ENCODE measurements at regions of chr2 and their contacts with region 1.

Region 1: DNA sequence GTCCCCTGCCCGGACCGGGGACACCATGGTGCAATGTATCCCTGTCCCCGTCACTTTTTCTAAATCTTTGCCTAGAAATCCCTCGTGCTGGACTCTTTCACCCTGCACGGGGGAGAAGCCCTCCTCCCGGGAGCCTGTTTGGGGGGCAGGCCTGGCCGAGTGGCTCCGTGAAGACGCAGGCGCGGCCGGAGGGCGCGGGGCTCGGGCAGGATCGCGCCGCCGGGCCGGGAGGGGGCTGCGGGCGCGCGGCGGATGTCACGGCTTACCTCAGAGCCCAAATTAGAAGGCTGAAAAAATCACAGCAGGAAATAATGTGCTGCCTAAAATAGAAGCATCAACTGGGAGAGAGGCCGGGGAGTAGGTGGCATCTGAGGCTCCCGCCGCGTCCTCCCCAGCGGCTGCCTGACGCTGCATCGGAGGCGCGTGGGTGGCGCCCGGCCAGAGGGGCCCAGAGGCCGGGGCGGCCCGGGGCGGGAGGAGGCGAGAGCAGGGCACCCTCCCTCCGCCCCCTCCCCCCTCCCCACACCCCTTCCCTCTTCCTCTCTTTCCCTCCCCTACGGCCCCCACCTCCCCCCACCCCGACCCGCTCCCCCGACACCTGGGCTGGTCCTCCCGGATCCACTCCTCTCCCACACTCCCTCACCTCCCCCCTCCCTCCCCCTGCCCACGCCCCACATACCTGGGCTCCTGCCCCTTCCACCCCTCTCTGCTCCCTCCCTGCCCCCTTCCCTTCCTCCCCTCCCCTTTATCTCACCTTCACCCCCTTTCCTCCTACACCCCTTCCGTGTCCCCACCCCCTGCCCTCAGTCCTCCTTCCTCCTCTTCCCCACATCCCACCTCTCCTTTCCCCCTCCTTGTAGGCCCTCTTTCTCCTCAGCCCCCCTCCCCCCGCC is 51.9 kb downstream of the SLC4A1AP start:
- DNase-seq: peak in 1 of 2 experiments; percentile 66
- H3K4me3 ChIP-seq: peak overlapping the region; percentile 79 to 97 (median 82)
- H3K27ac ChIP-seq: peak overlapping the region; percentile 29; the same call in 1 of the 2 replicates
- H3K4me1 ChIP-seq: peaks cover 3 to 15% (median 6%) of the 10 kb centered on the region in 4 experiments
- H3K27me3 ChIP-seq: no peaks in the 10 kb centered on the region
- CTCF ChIP-seq: no peak
- EP300 ChIP-seq: no peak
- POLR2A ChIP-seq: no peak; a peak in 1 of 3 replicates
- RAD21 ChIP-seq: no peak

Region 2: DNA sequence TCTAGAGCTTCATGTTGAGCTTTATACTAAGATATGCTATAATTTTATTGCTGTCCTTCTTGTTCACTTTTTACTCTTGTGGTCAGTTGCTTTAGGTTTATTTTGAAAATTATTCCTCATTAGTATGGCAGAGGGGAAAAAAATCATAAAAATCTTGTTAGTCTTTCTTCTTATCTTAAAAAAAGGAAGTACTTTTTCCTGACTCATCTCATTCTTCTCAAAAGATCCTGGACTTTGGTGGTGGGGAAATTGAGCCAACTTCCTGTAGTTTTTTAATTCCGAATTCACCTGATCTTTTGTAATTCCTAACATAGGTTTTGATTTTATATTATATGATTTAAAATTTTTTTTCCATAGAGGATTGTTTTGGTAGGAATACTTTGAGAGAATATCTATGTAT is 48.1 kb before region 1 on chr2:
- CTCF ChIA-PET with region 1: no interaction called
- POLR2A ChIA-PET with region 1: no interaction called
- DNase-seq: no peak
- H3K4me3 ChIP-seq: no peak overlapping the region
- H3K27ac ChIP-seq: no peak overlapping the region
- H3K4me1 ChIP-seq: peaks cover 0 to 1% (median 0%) of the 10 kb centered on the region in 4 experiments; a peak in 2 of 7 replicates
- H3K27me3 ChIP-seq: no peaks in the 10 kb centered on the region
- CTCF ChIP-seq: no peak
- EP300 ChIP-seq: no peak
- POLR2A ChIP-seq: no peak
- RAD21 ChIP-seq: no peak

Region 3: GRCh38 chr2:27690052-27690451 is 25.5 kb before region 1 on chr2:
- CTCF ChIA-PET with region 1: no interaction called
- POLR2A ChIA-PET with region 1: no interaction called
- DNase-seq: no peak
- H3K4me3 ChIP-seq: no peak overlapping the region
- H3K27ac ChIP-seq: no peak overlapping the region
- H3K4me1 ChIP-seq: no peaks in the 10 kb centered on the region
- H3K27me3 ChIP-seq: no peaks in the 10 kb centered on the region
- CTCF ChIP-seq: no peak
- EP300 ChIP-seq: no peak
- POLR2A ChIP-seq: no peak
- RAD21 ChIP-seq: no peak

Region 4: GRCh38 chr2:27703638-27704341 is 11.8 kb before region 1 on chr2:
- CTCF ChIA-PET with region 1: interaction called, 32 read pairs
- POLR2A ChIA-PET with region 1: interaction called, 11 read pairs
- DNase-seq: peak; percentile 77 to 94
- H3K4me3 ChIP-seq: no peak overlapping the region
- H3K27ac ChIP-seq: no peak overlapping the region
- H3K4me1 ChIP-seq: peaks cover 0 to 4% (median under 1%) of the 10 kb centered on the region in 4 experiments; a peak in 3 of 7 replicates
- H3K27me3 ChIP-seq: no peaks in the 10 kb centered on the region; a peak in 1 of 7 replicates
- CTCF ChIP-seq: peak; percentile 88 to 96 (median 89)
- EP300 ChIP-seq: no peak
- POLR2A ChIP-seq: no peak
- RAD21 ChIP-seq: peak; percentile 91 to 93

Region 5: DNA sequence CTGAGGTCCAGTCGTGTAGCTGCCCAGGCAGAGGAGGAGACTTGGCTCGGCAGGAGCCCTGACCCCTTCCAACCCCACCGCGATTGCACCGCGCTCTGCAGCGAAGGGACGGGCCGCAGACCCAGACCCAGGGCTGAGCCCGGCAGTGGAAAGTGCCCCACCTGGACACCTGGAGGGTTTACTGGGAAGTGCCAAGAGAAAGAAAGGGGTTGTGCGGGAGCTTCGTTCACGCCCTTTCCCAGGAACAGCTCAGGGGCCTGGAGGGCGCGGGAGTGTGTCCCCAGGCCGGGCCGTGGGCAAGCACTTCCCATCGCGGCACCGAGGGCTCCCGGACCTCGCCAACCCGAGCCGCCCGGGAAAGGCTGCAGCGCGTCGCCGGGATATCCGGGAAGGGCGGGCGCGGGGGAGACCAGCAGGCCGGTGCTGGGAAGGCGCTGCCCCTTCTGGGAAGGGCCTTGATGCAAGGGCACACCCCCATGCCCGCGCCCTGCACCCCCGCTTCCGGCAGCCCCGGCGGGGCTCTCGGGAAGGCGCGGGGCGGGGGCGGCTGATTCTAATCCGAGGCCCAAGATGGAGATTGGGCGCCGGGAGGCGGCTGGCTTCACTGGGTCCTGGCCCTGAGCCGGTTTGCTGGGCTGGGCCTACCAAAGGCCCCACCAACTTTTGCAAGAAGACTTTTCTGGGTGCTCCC is 19.8 kb after region 1 on chr2:
- CTCF ChIA-PET with region 1: interaction called, 3 read pairs
- POLR2A ChIA-PET with region 1: interaction called, 11 read pairs
- DNase-seq: peak; percentile 47 to 86
- H3K4me3 ChIP-seq: peak overlapping the region; percentile 55 to 65 (median 56)
- H3K27ac ChIP-seq: peak overlapping the region; percentile 54; the same call in 1 of the 2 replicates
- H3K4me1 ChIP-seq: peaks cover 5 to 12% (median 7%) of the 10 kb centered on the region in 4 experiments
- H3K27me3 ChIP-seq: no peaks in the 10 kb centered on the region; a peak in 1 of 7 replicates
- CTCF ChIP-seq: no peak
- EP300 ChIP-seq: no peak
- POLR2A ChIP-seq: peak; percentile 62 to 79
- RAD21 ChIP-seq: peak in 1 of 2 experiments; percentile 14; a peak in 1 of 4 replicates

Measured in H1 (cell line).